ENCODE measurements at regions of chr1 and their contacts with region 1.

Region 1: GRCh38 chr1:185821612-185822385 is 87.6 kb downstream of the HMCN1 start:
- DNase-seq: peak; percentile 10
- H3K4me3 ChIP-seq: no peak overlapping the region
- H3K27ac ChIP-seq: no peak overlapping the region
- H3K4me1 ChIP-seq: no peaks in the 10 kb centered on the region
- H3K27me3 ChIP-seq: no peaks in the 10 kb centered on the region
- CTCF ChIP-seq: peak in 1 of 2 donors; percentile 43

Region 2: DNA sequence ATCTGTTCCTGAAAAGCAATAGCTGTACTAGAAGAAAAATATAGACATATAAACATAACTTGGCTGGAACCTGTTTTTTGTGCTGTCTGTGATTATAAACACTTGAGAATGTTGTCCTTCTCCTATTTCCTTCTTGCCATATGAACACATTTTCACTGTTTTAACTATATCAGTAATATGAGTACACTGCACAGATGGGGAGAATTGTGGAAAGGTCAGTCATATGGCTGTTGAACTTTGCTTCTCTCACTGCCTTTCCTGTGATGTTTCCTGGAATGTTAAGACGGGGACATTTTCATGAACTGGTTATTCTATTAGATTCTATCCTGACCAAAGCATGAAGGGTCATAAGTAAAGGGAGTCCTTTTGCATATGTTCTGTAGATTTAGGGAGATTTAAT is 62.7 kb before region 1 on chr1:
- CTCF ChIA-PET with region 1: no interaction called
- dilution Hi-C with region 1: no loop called
- in situ Hi-C with region 1: no loop called
- intact Hi-C with region 1: no loop called
- DNase-seq: no peak
- H3K4me3 ChIP-seq: no peak overlapping the region
- H3K27ac ChIP-seq: no peak overlapping the region
- H3K4me1 ChIP-seq: no peaks in the 10 kb centered on the region
- H3K27me3 ChIP-seq: no peaks in the 10 kb centered on the region
- CTCF ChIP-seq: no peak

Region 3: DNA sequence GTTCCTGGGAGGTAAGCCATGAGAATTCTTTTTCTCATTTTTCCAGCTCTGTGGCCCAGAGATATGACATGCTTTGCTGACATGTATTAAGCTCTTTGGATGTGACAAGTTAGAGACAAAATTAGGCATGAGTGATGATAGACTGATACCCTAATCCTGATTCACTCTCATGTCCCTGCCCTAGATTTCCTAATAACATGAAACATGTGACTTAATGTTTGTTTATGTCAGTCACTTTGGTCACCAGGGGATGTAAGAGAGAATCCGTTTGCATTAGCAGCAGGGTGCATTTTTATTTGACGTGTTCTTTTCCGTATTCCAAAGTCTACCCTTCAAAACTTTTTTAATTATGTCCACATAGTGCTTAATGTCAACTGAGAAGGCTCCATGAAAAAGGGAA is 104.8 kb after region 1 on chr1:
- CTCF ChIA-PET with region 1: interaction called, 17 read pairs
- dilution Hi-C with region 1: no loop called
- in situ Hi-C with region 1: no loop called
- intact Hi-C with region 1: no loop called
- DNase-seq: no peak
- H3K4me3 ChIP-seq: no peak overlapping the region
- H3K27ac ChIP-seq: no peak overlapping the region
- H3K4me1 ChIP-seq: no peaks in the 10 kb centered on the region
- H3K27me3 ChIP-seq: no peaks in the 10 kb centered on the region
- CTCF ChIP-seq: no peak

Measured in mammary epithelial cell (primary cell).